IMR-90 (cell line): ENCODE measurements at regions of chr2 and their contacts with region 1.

Region 1: GRCh38 chr2:64482243-64482642 is 28.3 kb downstream of the LGALSL start:
- DNase-seq: no peak
- ATAC-seq: no peak
- H3K4me3 ChIP-seq: no peak overlapping the region
- H3K27ac ChIP-seq: no peak overlapping the region
- H3K4me1 ChIP-seq: no peaks in the 10 kb centered on the region
- H3K27me3 ChIP-seq: peaks cover 60% of the 10 kb centered on the region
- CTCF ChIP-seq: no peak
- POLR2A ChIP-seq: no peak
- RAD21 ChIP-seq: no peak

Region 2: GRCh38 chr2:64243081-64244036 is 238.9 kb before region 1 on chr2:
- CTCF ChIA-PET with region 1: no interaction called
- POLR2A ChIA-PET with region 1: no interaction called
- dilution Hi-C with region 1: no loop called
- in situ Hi-C with region 1: no loop called
- intact Hi-C with region 1: no loop called
- DNase-seq: no peak
- ATAC-seq: no peak
- H3K4me3 ChIP-seq: no peak overlapping the region
- H3K27ac ChIP-seq: no peak overlapping the region
- H3K4me1 ChIP-seq: no peaks in the 10 kb centered on the region
- H3K27me3 ChIP-seq: peaks cover 25% of the 10 kb centered on the region
- CTCF ChIP-seq: no peak
- POLR2A ChIP-seq: no peak
- RAD21 ChIP-seq: no peak

Region 3: GRCh38 chr2:64462940-64463700 is 19.1 kb before region 1 on chr2:
- CTCF ChIA-PET with region 1: no interaction called
- POLR2A ChIA-PET with region 1: interaction called, 13 read pairs
- dilution Hi-C with region 1: no loop called
- in situ Hi-C with region 1: no loop called
- intact Hi-C with region 1: no loop called
- DNase-seq: peak; percentile 22
- ATAC-seq: no peak
- H3K4me3 ChIP-seq: no peak overlapping the region
- H3K27ac ChIP-seq: no peak overlapping the region
- H3K4me1 ChIP-seq: no peaks in the 10 kb centered on the region; the same call in 1 of the 2 replicates
- H3K27me3 ChIP-seq: peaks cover 17% of the 10 kb centered on the region
- CTCF ChIP-seq: no peak
- POLR2A ChIP-seq: no peak
- RAD21 ChIP-seq: no peak

Region 4: GRCh38 chr2:65227425-65228262 is 745.4 kb after region 1 on chr2 and contains the start of gene ACTR2:
- CTCF ChIA-PET with region 1: no interaction called
- POLR2A ChIA-PET with region 1: no interaction called
- dilution Hi-C with region 1: no loop called
- in situ Hi-C with region 1: no loop called
- intact Hi-C with region 1: no loop called
- DNase-seq: peak; percentile 96
- ATAC-seq: peak; percentile 96
- H3K4me3 ChIP-seq: peak within 1 kb of the TSS; percentile 90
- H3K27ac ChIP-seq: peak within 1 kb of the TSS; percentile 98
- H3K4me1 ChIP-seq: peaks cover 6% of the 10 kb centered on the region
- H3K27me3 ChIP-seq: no peaks in the 10 kb centered on the region
- CTCF ChIP-seq: no peak
- POLR2A ChIP-seq: peak; percentile 92
- RAD21 ChIP-seq: no peak
- total RNA-seq, gene ACTR2: 205 and 224 TPM in 2 replicates